ENCODE measurements at regions of chr15 and their contacts with region 1.

Region 1: GRCh38 chr15:62165104-62165792 is at the start of gene C2CD4B:
- DNase-seq: peak; percentile 87 to 93
- H3K4me3 ChIP-seq: peak within 1 kb of the TSS; percentile 51 to 74 (median 62)
- H3K27ac ChIP-seq: peak within 1 kb of the TSS; percentile 75 to 90 (median 87)
- H3K4me1 ChIP-seq: peaks cover 10 to 36% (median 32%) of the 10 kb centered on the region in 4 donors
- H3K27me3 ChIP-seq: peaks cover 0 to 61% (median 15%) of the 10 kb centered on the region in 3 donors
- CTCF ChIP-seq: peak in 3 of 7 experiments; percentile 5 to 51 (median 30)
- EP300 ChIP-seq: no peak
- POLR2A ChIP-seq: peak in 3 of 4 donors; percentile 73 to 95 (median 85)
- total RNA-seq, gene C2CD4B: 2.3 to 30.3 (median 22.3) TPM in 4 of 5 donors, not detected in the other

Region 2: GRCh38 chr15:61951949-61952348 is 213.3 kb before region 1 on chr15:
- intact Hi-C with region 1: no loop called
- DNase-seq: peak; percentile 15 to 25
- H3K4me3 ChIP-seq: no peak overlapping the region
- H3K27ac ChIP-seq: no peak overlapping the region
- H3K4me1 ChIP-seq: no peaks in the 10 kb centered on the region
- H3K27me3 ChIP-seq: no peaks in the 10 kb centered on the region
- CTCF ChIP-seq: no peak
- EP300 ChIP-seq: no peak
- POLR2A ChIP-seq: no peak

Region 3: GRCh38 chr15:62219799-62220198 is 54.6 kb after region 1 on chr15:
- intact Hi-C with region 1: loop called (anchors 10 kb)
- DNase-seq: no peak
- H3K4me3 ChIP-seq: no peak overlapping the region
- H3K27ac ChIP-seq: no peak overlapping the region
- H3K4me1 ChIP-seq: no peaks in the 10 kb centered on the region
- H3K27me3 ChIP-seq: no peaks in the 10 kb centered on the region
- CTCF ChIP-seq: no peak
- EP300 ChIP-seq: no peak
- POLR2A ChIP-seq: no peak